GM12878 (cell line): ENCODE measurements at regions of chr3 and their contacts with region 1.

Region 1: DNA sequence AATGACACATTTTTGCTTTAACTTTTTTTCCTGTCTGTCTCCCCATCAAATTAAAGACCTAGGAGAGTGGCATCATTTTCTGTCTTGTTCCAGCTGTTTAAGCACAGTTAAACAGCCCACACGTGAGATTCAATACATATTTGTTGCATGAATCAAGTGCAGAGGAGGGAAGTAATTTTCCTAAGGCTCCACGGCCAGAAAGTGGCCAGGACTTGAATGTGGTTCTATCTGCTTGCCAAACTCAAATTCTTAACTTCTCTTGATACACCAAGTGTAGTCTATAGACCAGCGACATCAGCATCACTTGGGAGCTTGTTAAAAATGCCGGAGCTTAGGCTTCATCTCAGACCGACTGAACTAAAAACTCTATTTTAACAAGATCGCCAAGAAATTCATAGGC is 724.8 kb upstream of the CFAP20DC start:
- DNase-seq: no peak
- ATAC-seq: no peak
- H3K4me3 ChIP-seq: no peak overlapping the region
- H3K27ac ChIP-seq: no peak overlapping the region
- H3K4me1 ChIP-seq: peaks cover 13% of the 10 kb centered on the region
- H3K27me3 ChIP-seq: no peaks in the 10 kb centered on the region; a peak in 1 of 4 replicates
- CTCF ChIP-seq: no peak
- EP300 ChIP-seq: no peak
- POLR2A ChIP-seq: no peak
- RAD21 ChIP-seq: no peak

Region 2: DNA sequence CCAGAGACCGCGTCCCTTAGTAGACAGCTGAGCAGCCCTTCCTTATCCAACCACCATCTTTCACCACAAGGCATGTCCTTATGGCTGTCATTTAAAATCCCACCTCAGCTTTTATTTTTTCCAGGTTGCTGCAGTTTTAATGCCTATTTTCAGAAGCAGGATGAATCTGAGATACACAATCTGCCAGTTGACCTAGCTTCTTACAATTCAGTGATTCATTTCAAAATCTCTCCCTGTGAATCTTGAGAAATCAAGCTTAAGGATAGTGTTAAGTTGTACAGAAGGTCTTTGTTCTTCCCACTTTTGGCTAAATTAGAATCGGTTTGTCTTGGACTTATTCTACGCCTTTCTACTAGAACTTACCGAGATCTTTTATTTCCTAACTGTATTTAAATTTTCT is 202.5 kb before region 1 on chr3:
- CTCF ChIA-PET with region 1: no interaction called
- POLR2A ChIA-PET with region 1: no interaction called
- RAD21 ChIA-PET with region 1: no interaction called
- SMC1A ChIA-PET with region 1: no interaction called
- in situ Hi-C with region 1: no loop called
- intact Hi-C with region 1: no loop called
- DNase-seq: no peak
- ATAC-seq: no peak
- H3K4me3 ChIP-seq: no peak overlapping the region
- H3K27ac ChIP-seq: no peak overlapping the region
- H3K4me1 ChIP-seq: peaks cover 17% of the 10 kb centered on the region
- H3K27me3 ChIP-seq: no peaks in the 10 kb centered on the region
- CTCF ChIP-seq: no peak
- EP300 ChIP-seq: no peak
- POLR2A ChIP-seq: no peak
- RAD21 ChIP-seq: no peak

Region 3: GRCh38 chr3:59839810-59840515 is 65.3 kb after region 1 on chr3:
- CTCF ChIA-PET with region 1: no interaction called
- POLR2A ChIA-PET with region 1: no interaction called
- RAD21 ChIA-PET with region 1: no interaction called
- SMC1A ChIA-PET with region 1: no interaction called
- in situ Hi-C with region 1: no loop called
- intact Hi-C with region 1: loop called (anchors 5 kb)
- DNase-seq: peak; percentile 40
- ATAC-seq: peak; percentile 97
- H3K4me3 ChIP-seq: no peak overlapping the region
- H3K27ac ChIP-seq: no peak overlapping the region
- H3K4me1 ChIP-seq: peaks cover 6% of the 10 kb centered on the region
- H3K27me3 ChIP-seq: no peaks in the 10 kb centered on the region
- CTCF ChIP-seq: no peak
- EP300 ChIP-seq: peak in 1 of 2 experiments; percentile 43; a peak in 2 of 4 replicates
- POLR2A ChIP-seq: no peak
- RAD21 ChIP-seq: no peak